Heart right ventricle (tissue), 16 donors: ENCODE measurements at regions of chr6 and their contacts with region 1.

Region 1: DNA sequence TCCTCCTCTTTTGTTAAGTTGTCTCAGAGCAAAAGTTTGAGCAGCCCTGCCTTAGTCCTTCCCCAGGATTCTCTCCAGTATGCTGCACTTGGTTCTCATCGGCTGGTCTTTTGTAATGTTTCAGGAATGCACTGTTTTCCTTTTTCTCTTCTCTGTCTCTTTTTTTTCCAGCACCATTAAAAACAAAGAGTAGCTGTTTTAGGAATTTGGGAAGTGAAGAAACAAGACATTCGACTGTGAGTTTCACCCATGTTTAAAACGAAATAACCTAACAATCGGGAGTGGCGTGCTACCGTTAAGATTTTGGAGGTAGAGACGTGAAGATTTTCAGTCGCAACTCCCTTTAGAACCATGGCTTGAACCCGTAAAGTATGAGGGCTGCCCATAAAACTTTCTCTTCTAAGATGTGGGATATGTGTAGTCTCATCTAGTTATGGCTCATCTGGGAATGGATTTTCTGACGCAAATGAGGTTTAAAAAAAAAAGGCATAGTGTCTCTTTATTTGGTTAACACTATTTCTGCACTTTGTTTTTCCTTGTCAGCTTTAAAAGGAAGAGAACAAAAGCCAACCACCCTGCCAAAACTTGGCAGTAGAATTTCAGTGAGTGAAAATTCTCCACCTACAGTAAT is 35.9 kb upstream of the RAB23 start:
- DNase-seq: no peak
- ATAC-seq: peak in 7 of 8 donors; percentile 21 to 72 (median 50)
- H3K4me3 ChIP-seq: peak overlapping the region in 4 of 10 donors; percentile 3 to 13 (median 10)
- H3K27ac ChIP-seq: peak overlapping the region in 9 of 10 donors; percentile 35 to 79 (median 70)
- H3K4me1 ChIP-seq: peaks cover 0 to 17% (median 0%) of the 10 kb centered on the region in 9 donors
- H3K27me3 ChIP-seq: no peaks in the 10 kb centered on the region
- CTCF ChIP-seq: no peak

Region 2: DNA sequence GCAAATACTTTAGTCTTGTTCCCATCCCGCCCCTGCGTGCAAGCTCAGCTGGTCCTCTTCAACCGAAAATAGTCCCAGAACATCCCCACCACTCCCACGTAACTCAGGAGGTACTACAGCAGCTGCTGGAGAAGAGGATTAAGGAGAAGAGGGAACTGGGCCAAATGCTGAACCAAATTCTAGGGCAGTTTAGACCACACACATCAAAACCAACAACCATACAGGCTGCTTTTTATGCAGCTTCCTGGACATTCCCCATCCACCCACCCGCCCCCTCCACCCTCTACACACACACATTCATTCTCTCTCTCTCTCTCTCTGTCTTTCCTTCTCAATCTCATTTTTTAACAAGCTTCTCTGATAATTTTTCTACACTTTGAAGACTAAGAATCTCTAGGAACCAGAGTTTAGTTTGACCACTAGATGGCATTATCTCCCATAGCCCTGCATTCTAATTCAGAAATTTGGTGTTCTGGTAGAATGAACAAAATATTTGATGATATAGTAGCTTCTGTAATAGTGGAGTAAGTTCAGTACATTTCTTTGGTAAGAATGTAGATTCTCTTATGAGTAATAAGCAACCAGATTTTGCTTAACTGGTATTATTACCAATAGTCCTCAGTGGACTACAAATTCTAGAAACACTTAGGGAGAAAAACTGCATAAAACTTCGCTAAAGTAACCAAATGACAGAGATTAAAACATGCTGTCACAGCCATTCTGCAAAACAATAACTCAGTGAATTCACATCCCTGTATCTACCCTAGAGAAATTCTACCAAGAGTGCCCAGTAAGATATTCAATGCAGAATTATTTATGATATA is 355.2 kb before region 1 on chr6:
- intact Hi-C with region 1: no loop called
- DNase-seq: peak in 1 of 2 donors; percentile 9
- ATAC-seq: peak in 6 of 8 donors; percentile 42 to 74 (median 56)
- H3K4me3 ChIP-seq: peak overlapping the region in 1 of 10 donors; percentile 8
- H3K27ac ChIP-seq: no peak overlapping the region
- H3K4me1 ChIP-seq: peaks cover 0 to 5% (median 0%) of the 10 kb centered on the region in 9 donors
- H3K27me3 ChIP-seq: no peaks in the 10 kb centered on the region
- CTCF ChIP-seq: peak; percentile 53 to 84 (median 74)

Region 3: DNA sequence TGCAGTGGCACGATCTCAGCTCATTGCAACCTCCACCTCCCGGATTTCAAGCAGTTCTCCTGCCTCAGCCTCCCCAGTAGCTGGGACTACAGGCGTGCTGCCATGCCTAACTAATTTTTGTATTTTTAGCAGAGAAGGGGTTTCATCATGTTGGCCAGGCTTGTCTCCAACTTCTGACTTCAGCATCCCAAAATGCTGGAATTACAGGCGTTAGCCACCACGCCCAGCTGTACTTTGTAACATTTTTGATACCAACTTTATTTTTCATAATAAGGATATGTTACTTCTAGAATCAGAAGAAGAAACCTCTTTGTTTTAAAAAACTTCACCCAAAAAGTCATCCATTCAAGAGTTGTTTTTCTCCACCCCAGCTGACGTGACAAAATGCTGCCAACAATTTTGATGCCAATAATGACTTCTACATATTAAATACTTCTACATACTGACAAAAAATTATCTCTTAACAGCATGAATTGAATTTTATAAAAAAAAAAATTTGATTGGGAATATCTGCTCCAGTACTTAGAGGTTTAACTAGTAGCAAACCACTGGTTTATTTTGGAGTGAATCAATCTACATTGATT is 36.9 kb after region 1 on chr6:
- intact Hi-C with region 1: loop called in 1 of 10 experiments (anchors 1 kb)
- DNase-seq: no peak
- ATAC-seq: peak in 4 of 8 donors; percentile 34 to 67 (median 50)
- H3K4me3 ChIP-seq: no peak overlapping the region
- H3K27ac ChIP-seq: peak overlapping the region in 3 of 10 donors; percentile 6 to 34 (median 31)
- H3K4me1 ChIP-seq: peaks cover 0 to 10% (median 0%) of the 10 kb centered on the region in 9 donors
- H3K27me3 ChIP-seq: no peaks in the 10 kb centered on the region
- CTCF ChIP-seq: no peak